ENCODE measurements at regions of chr11 and their contacts with region 1.

Region 1: GRCh38 chr11:118883368-118884071 is at the start of gene CXCR5:
- DNase-seq: peak; percentile 69
- ATAC-seq: peak; percentile 78
- H3K4me3 Mint-ChIP-seq: peak within 1 kb of the TSS; percentile 98
- H3K27ac Mint-ChIP-seq: peak within 1 kb of the TSS; percentile 98
- H3K4me1 Mint-ChIP-seq: peaks cover 71% of the 10 kb centered on the region
- H3K27me3 Mint-ChIP-seq: no peaks in the 10 kb centered on the region
- CTCF ChIP-seq: no peak
- total RNA-seq, gene CXCR5: 198 and 199 TPM in 2 replicates

Region 2: GRCh38 chr11:118290923-118291322 is 592.6 kb before region 1 on chr11:
- CTCF ChIA-PET with region 1: no interaction called
- POLR2A ChIA-PET with region 1: no interaction called
- intact Hi-C with region 1: no loop called
- DNase-seq: no peak
- ATAC-seq: peak; percentile 37
- H3K4me3 Mint-ChIP-seq: no peak overlapping the region
- H3K27ac Mint-ChIP-seq: no peak overlapping the region
- H3K4me1 Mint-ChIP-seq: no peaks in the 10 kb centered on the region
- H3K27me3 Mint-ChIP-seq: peaks cover 15% of the 10 kb centered on the region
- CTCF ChIP-seq: no peak

Region 3: GRCh38 chr11:118689851-118690552 is 193.5 kb before region 1 on chr11:
- CTCF ChIA-PET with region 1: interaction called, 7 read pairs
- POLR2A ChIA-PET with region 1: interaction called, 8 read pairs
- intact Hi-C with region 1: loop called (anchors 2 kb)
- DNase-seq: peak; percentile 74
- ATAC-seq: peak; percentile 95
- H3K4me3 Mint-ChIP-seq: peak overlapping the region; percentile 79
- H3K27ac Mint-ChIP-seq: peak overlapping the region; percentile 15
- H3K4me1 Mint-ChIP-seq: peaks cover 12% of the 10 kb centered on the region
- H3K27me3 Mint-ChIP-seq: peaks cover 4% of the 10 kb centered on the region
- CTCF ChIP-seq: peak; percentile 55

Region 4: DNA sequence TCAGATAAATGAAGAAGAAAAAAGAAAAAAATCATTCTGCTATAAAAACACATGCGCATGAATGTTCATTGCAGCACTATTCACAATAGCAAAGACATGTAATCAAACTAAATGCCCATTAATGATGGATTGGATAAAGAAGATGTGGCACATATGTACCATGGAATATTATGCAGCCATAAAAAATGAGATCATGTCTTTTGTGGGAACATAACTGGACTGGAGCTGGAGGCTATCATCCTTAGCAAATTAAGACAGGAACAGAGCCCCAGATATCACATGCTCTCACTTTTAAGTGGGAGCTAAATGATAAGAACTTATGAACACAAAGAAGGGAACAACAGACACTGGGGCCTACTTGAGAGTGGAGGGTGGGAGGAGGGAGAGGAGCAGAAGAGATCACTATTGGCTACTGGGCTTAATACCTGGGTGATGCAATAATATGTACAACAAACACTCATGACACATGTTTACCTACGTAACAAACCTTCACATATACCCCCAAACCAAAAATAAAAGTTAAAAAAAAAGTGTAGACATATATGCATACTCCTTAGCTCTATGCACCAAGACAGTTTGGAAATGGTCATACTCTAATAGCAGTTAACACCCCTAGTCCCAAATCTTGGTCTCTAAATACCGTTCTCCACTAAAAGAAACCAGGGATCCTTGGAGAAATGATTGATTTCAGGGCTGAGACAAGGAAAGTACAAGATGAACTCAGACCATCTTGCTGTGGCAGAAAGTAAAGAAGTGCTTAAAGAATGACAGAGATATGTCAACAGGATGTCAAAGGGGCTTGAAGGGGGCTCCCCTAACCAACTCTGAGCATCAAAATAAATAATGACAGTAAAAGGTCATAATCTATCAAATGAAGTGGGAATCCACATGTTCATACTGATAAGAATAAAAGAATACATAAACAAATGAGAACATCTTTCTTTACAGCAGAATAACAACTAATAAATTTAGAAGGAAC is 75.4 kb before region 1 on chr11:
- CTCF ChIA-PET with region 1: interaction called, 3 read pairs
- POLR2A ChIA-PET with region 1: interaction called, 23 read pairs
- intact Hi-C with region 1: no loop called
- DNase-seq: no peak
- ATAC-seq: peak; percentile 47
- H3K4me3 Mint-ChIP-seq: peak overlapping the region; percentile 8
- H3K27ac Mint-ChIP-seq: peak overlapping the region; percentile 64
- H3K4me1 Mint-ChIP-seq: peaks cover 65% of the 10 kb centered on the region
- H3K27me3 Mint-ChIP-seq: no peaks in the 10 kb centered on the region
- CTCF ChIP-seq: no peak

Region 5: GRCh38 chr11:118838905-118839553 is 44.5 kb before region 1 on chr11:
- CTCF ChIA-PET with region 1: interaction called, 10 read pairs
- POLR2A ChIA-PET with region 1: interaction called, 13 read pairs
- intact Hi-C with region 1: loop called (anchors 1 kb)
- DNase-seq: no peak
- ATAC-seq: peak; percentile 78
- H3K4me3 Mint-ChIP-seq: peak overlapping the region; percentile 47
- H3K27ac Mint-ChIP-seq: peak overlapping the region; percentile 85
- H3K4me1 Mint-ChIP-seq: peaks cover 61% of the 10 kb centered on the region
- H3K27me3 Mint-ChIP-seq: no peaks in the 10 kb centered on the region
- CTCF ChIP-seq: no peak

Region 6: GRCh38 chr11:118870396-118871345 is 12.8 kb before region 1 on chr11:
- CTCF ChIA-PET with region 1: interaction called, 15 read pairs
- POLR2A ChIA-PET with region 1: interaction called, 17 read pairs
- intact Hi-C with region 1: loop called (anchors 1 kb)
- DNase-seq: peak; percentile 54
- ATAC-seq: peak; percentile 56
- H3K4me3 Mint-ChIP-seq: peak overlapping the region; percentile 83
- H3K27ac Mint-ChIP-seq: peak overlapping the region; percentile 99
- H3K4me1 Mint-ChIP-seq: peaks cover 68% of the 10 kb centered on the region
- H3K27me3 Mint-ChIP-seq: no peaks in the 10 kb centered on the region
- CTCF ChIP-seq: no peak

Region 7: GRCh38 chr11:119134389-119134978 is 251.0 kb after region 1 on chr11:
- CTCF ChIA-PET with region 1: no interaction called
- POLR2A ChIA-PET with region 1: no interaction called
- intact Hi-C with region 1: no loop called
- DNase-seq: no peak
- ATAC-seq: peak; percentile 47
- H3K4me3 Mint-ChIP-seq: no peak overlapping the region
- H3K27ac Mint-ChIP-seq: no peak overlapping the region
- H3K4me1 Mint-ChIP-seq: no peaks in the 10 kb centered on the region
- H3K27me3 Mint-ChIP-seq: peaks cover 3% of the 10 kb centered on the region
- CTCF ChIP-seq: no peak

Measured in activated B cell treated with CpG ODN at 0.5 μM for 24 hours (primary cell).